Activated CD4-positive, alpha-beta T cell treated with anti-CD3 and anti-CD28 coated beads for 36 hours (primary cell): ENCODE measurements at regions of chr15 and their contacts with region 1.

Region 1: DNA sequence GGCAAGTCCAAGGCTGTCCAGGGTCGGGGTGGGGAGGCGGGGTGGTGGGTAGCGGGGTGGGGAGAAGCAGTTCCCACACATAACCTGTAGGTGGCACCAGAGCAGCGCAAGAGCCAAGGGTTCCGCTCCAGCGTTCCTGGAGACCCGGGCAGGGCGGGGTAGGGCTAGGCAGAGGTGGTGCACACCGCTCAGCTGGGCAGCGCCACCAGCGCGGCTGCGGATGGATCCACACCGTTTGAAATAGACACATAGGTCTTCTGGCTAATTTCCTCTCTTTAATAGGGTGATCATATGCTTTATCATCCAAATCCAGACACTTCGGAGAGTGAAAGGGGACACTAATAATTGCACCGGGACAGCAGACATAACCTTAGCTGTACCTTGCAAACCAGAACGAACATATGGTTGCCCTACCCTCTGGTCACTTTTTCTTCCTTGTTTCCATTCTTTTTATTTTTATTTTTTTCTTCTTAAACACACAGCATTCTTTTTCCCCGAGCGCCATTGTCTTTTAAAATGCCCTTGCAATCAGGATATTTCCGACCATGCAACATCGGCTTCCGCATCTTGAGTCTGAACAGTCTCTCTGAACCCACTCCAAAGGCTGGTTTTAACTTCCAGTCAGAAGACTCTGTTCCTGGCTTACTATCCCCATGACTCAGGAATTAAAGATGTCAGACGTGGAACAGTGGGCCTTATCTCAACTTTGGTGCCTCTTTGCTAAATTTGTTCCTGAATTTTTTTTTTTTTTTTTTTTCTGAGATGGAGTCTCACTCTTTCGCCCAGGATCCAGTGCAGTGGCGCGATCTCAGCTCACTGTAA is 12.5 kb upstream of the ZSCAN2 start:
- DNase-seq: peak; percentile 93
- ATAC-seq: peak; percentile 100
- H3K4me3 Mint-ChIP-seq: peak overlapping the region; percentile 35
- H3K27ac Mint-ChIP-seq: no peak overlapping the region
- H3K4me1 Mint-ChIP-seq: peaks cover 2% of the 10 kb centered on the region
- H3K27me3 Mint-ChIP-seq: no peaks in the 10 kb centered on the region

Region 2: GRCh38 chr15:84570164-84570735 is 18.0 kb before region 1 on chr15:
- CTCF ChIA-PET with region 1: interaction called, 65 read pairs
- POLR2A ChIA-PET with region 1: no interaction called
- intact Hi-C with region 1: no loop called
- DNase-seq: peak; percentile 69
- ATAC-seq: peak; percentile 43
- H3K4me3 Mint-ChIP-seq: peak overlapping the region; percentile 73
- H3K27ac Mint-ChIP-seq: peak overlapping the region; percentile 77
- H3K4me1 Mint-ChIP-seq: peaks cover 20% of the 10 kb centered on the region
- H3K27me3 Mint-ChIP-seq: peaks cover 2% of the 10 kb centered on the region

Region 3: GRCh38 chr15:84773716-84774115 is 185.5 kb after region 1 on chr15:
- CTCF ChIA-PET with region 1: no interaction called
- POLR2A ChIA-PET with region 1: no interaction called
- intact Hi-C with region 1: loop called in 1 of 2 experiments (anchors 10 kb)
- DNase-seq: no peak
- ATAC-seq: no peak
- H3K4me3 Mint-ChIP-seq: no peak overlapping the region
- H3K27ac Mint-ChIP-seq: no peak overlapping the region
- H3K4me1 Mint-ChIP-seq: peaks cover 32% of the 10 kb centered on the region
- H3K27me3 Mint-ChIP-seq: no peaks in the 10 kb centered on the region

Region 4: DNA sequence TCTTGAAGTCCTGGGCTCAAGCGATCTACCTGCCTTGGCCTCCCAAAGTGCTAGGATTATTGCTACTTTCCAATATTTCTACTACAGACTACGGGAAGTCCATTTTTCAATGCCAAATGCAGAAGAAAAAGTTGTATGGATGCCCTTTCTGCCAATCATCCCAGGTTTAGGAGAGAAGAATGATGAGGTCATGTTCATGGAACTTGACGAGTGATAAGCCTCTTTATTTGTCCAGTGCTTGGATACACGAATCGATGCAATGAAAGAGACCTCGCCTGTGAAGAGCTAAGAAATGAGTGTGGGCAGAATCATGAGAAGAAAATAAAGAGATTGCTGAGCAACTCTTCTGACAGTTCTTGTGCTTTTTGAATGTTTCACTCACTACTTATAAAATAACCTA is 295.2 kb after region 1 on chr15:
- CTCF ChIA-PET with region 1: interaction called, 6 read pairs
- POLR2A ChIA-PET with region 1: no interaction called
- intact Hi-C with region 1: loop called (anchors 1 kb)
- DNase-seq: no peak
- ATAC-seq: no peak
- H3K4me3 Mint-ChIP-seq: no peak overlapping the region
- H3K27ac Mint-ChIP-seq: no peak overlapping the region
- H3K4me1 Mint-ChIP-seq: no peaks in the 10 kb centered on the region
- H3K27me3 Mint-ChIP-seq: no peaks in the 10 kb centered on the region

Region 5: GRCh38 chr15:84992157-84992944 is 404.1 kb after region 1 on chr15:
- CTCF ChIA-PET with region 1: no interaction called
- POLR2A ChIA-PET with region 1: no interaction called
- intact Hi-C with region 1: loop called in 1 of 2 experiments (anchors 10 kb)
- DNase-seq: peak; percentile 72
- ATAC-seq: peak; percentile 89
- H3K4me3 Mint-ChIP-seq: no peak overlapping the region
- H3K27ac Mint-ChIP-seq: peak overlapping the region; percentile 45
- H3K4me1 Mint-ChIP-seq: peaks cover 52% of the 10 kb centered on the region
- H3K27me3 Mint-ChIP-seq: no peaks in the 10 kb centered on the region

Region 6: GRCh38 chr15:85059734-85060133 is 471.5 kb after region 1 on chr15:
- CTCF ChIA-PET with region 1: no interaction called
- POLR2A ChIA-PET with region 1: no interaction called
- intact Hi-C with region 1: no loop called
- DNase-seq: no peak
- ATAC-seq: no peak
- H3K4me3 Mint-ChIP-seq: no peak overlapping the region
- H3K27ac Mint-ChIP-seq: no peak overlapping the region
- H3K4me1 Mint-ChIP-seq: peaks cover 30% of the 10 kb centered on the region
- H3K27me3 Mint-ChIP-seq: no peaks in the 10 kb centered on the region